ENCODE measurements at regions of chr2 and their contacts with region 1.

Region 1: GRCh38 chr2:11863513-11864328 is 117.3 kb downstream of the LPIN1 start:
- DNase-seq: peak; percentile 41
- ATAC-seq: peak; percentile 65
- H3K4me3 Mint-ChIP-seq: peak overlapping the region; percentile 47
- H3K27ac Mint-ChIP-seq: peak overlapping the region; percentile 41
- H3K4me1 Mint-ChIP-seq: peaks cover 92% of the 10 kb centered on the region
- H3K27me3 Mint-ChIP-seq: no peaks in the 10 kb centered on the region
- CTCF ChIP-seq: peak; percentile 85

Region 2: DNA sequence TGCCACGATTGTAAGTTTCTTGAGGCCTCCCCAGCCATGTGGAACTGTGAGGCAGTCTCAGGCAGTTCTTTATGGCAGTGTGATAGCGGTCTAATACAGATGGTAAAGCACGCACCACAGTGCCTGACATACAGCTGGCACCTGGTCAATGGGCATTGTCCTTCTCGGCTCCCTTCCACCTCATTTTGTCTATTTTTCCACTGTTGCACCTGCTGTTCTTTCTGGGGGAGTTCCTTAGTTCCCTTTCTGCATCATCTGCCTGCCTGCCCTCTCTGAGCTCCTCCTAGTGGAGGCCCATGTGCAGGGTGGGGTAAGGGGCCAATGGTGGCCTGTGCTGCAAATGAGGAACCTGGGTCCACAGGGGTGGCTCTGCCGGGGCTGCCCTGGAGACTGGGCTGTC is 40.3 kb after region 1 on chr2:
- CTCF ChIA-PET with region 1: no interaction called
- POLR2A ChIA-PET with region 1: no interaction called
- intact Hi-C with region 1: loop called (anchors 1 kb)
- DNase-seq: peak; percentile 29
- ATAC-seq: peak; percentile 98
- H3K4me3 Mint-ChIP-seq: no peak overlapping the region
- H3K27ac Mint-ChIP-seq: peak overlapping the region; percentile 67
- H3K4me1 Mint-ChIP-seq: peaks cover 24% of the 10 kb centered on the region
- H3K27me3 Mint-ChIP-seq: no peaks in the 10 kb centered on the region
- CTCF ChIP-seq: no peak

Region 3: DNA sequence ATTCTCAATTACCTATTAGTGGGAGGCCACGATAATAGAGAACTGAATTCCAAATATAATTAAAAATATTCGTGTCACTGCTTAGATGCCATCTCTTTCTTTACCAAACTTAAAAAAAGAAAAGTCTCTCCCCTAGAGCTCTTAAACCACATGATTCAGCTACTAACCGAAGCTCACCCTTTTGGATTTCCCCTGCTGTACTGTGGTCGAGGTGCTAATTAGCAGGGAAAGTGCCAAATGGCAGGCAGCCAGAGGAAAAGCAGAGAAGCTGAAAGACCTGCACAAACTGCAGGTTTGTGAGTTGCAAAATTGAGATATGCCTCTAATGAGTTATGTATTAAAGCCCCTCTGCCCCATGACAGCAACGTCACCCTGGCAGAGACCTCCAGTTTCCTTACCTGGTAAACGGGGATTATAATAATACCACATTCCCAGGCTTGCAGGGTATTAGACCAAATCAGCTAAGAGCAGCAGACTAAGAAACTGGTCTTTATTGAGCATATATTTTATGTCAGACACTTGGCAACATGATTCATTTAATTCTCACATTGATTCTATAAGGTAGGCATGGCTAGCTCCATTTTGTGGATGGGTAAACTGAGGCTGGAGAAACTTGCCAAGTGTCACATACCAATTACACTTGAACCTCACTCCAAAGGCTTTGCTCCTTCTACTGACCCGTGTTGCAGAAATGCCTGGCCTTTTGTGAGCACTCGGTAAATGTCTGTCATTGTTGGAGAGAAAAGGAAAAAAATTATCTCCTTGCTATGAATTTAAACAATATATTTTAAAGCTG is 142.4 kb after region 1 on chr2:
- CTCF ChIA-PET with region 1: no interaction called
- POLR2A ChIA-PET with region 1: no interaction called
- intact Hi-C with region 1: loop called (anchors 10 kb)
- DNase-seq: no peak
- ATAC-seq: peak; percentile 77
- H3K4me3 Mint-ChIP-seq: peak overlapping the region; percentile 46
- H3K27ac Mint-ChIP-seq: peak overlapping the region; percentile 56
- H3K4me1 Mint-ChIP-seq: peaks cover 57% of the 10 kb centered on the region
- H3K27me3 Mint-ChIP-seq: no peaks in the 10 kb centered on the region
- CTCF ChIP-seq: no peak

Region 4: GRCh38 chr2:12169721-12170120 is 306.0 kb after region 1 on chr2:
- CTCF ChIA-PET with region 1: interaction called, 4 read pairs
- POLR2A ChIA-PET with region 1: no interaction called
- intact Hi-C with region 1: loop called (anchors 5 kb)
- DNase-seq: no peak
- ATAC-seq: no peak
- H3K4me3 Mint-ChIP-seq: no peak overlapping the region
- H3K27ac Mint-ChIP-seq: no peak overlapping the region
- H3K4me1 Mint-ChIP-seq: peaks cover 30% of the 10 kb centered on the region
- H3K27me3 Mint-ChIP-seq: no peaks in the 10 kb centered on the region
- CTCF ChIP-seq: no peak

Region 5: GRCh38 chr2:12931186-12931844 is 1067.6 kb after region 1 on chr2:
- CTCF ChIA-PET with region 1: interaction called, 7 read pairs
- POLR2A ChIA-PET with region 1: no interaction called
- intact Hi-C with region 1: loop called (anchors 1 kb)
- DNase-seq: no peak
- ATAC-seq: peak; percentile 49
- H3K4me3 Mint-ChIP-seq: no peak overlapping the region
- H3K27ac Mint-ChIP-seq: no peak overlapping the region
- H3K4me1 Mint-ChIP-seq: peaks cover 15% of the 10 kb centered on the region
- H3K27me3 Mint-ChIP-seq: no peaks in the 10 kb centered on the region
- CTCF ChIP-seq: no peak